ENCODE measurements at regions of chr17 and their contacts with region 1.

Region 1: DNA sequence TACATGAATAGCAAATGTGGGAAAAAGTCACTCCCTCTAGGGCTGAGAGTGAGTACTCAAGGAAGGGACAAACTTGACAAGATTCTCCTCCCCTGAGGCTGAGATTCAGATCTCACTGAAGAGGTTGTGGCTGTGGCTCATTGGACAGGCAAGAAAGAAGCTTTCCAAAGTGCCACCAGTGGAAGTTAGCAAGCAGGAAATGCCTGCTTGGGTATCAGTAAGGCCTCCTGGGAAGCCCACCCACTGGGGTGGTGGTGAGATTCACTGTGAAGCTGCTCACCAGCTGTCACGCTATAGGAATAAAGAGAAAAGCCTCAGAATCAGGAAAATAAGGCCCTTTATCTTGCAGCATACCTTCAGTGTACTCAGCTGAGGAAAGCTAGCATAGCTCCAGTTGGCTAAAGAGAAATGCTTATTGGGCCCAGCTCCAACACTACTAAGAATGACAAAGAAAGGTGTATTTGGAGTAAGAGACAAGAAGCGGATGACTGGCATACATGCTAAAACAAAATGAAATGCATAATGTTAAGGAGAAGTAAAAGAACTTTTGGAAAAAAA is 274.4 kb upstream of the TOM1L1 start:
- DNase-seq: no peak
- ATAC-seq: no peak
- H3K4me3 ChIP-seq: no peak overlapping the region
- H3K27ac ChIP-seq: no peak overlapping the region
- H3K4me1 ChIP-seq: no peaks in the 10 kb centered on the region
- H3K27me3 ChIP-seq: no peaks in the 10 kb centered on the region

Region 2: DNA sequence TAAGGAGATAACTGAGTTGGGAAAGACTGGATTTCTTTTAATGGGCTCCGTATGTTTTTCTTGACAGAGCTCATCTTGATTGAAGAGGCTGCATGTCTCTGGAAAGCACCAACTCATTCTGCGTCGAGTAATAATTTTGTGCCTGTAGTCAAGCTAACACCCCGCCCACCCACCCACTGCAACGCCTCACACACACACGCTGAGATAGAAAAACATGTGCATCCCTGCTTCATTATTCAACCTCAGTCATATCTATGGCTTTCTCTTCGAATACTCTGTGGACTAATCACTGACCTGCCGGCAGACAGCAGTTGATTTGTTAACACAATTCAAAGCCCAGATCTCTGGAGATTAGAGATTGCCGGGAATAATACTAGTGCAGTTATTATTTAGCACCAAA is 54.2 kb after region 1 on chr17:
- intact Hi-C with region 1: loop called in 1 of 2 experiments (anchors 10 kb)
- DNase-seq: no peak
- ATAC-seq: no peak
- H3K4me3 ChIP-seq: no peak overlapping the region
- H3K27ac ChIP-seq: no peak overlapping the region
- H3K4me1 ChIP-seq: no peaks in the 10 kb centered on the region
- H3K27me3 ChIP-seq: no peaks in the 10 kb centered on the region

Region 3: DNA sequence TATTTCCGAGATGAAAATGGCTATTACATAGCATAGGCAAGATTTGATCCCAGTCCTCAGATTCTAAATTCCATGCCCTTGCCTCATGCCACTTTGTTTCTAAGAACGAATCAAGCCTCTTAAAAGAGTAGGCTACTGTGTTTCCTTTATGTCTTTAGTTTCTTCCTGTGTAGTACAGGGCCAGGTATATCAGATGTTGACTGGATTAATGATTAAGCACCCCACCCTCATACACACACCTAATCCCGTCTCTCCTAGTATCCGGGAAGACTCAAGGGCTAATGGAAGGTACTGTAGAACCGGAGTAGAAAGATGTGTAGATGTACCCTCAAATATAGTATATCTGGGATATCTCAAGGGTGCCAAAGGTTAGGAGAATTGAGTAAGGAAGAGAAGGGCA is 281.2 kb after region 1 on chr17:
- intact Hi-C with region 1: no loop called
- DNase-seq: no peak
- ATAC-seq: no peak
- H3K4me3 ChIP-seq: no peak overlapping the region
- H3K27ac ChIP-seq: no peak overlapping the region
- H3K4me1 ChIP-seq: no peaks in the 10 kb centered on the region
- H3K27me3 ChIP-seq: no peaks in the 10 kb centered on the region